Activated CD4-positive, alpha-beta T cell treated with anti-CD3 and anti-CD28 coated beads for 36 hours (primary cell): ENCODE measurements at regions of chr5 and their contacts with region 1.

Region 1: DNA sequence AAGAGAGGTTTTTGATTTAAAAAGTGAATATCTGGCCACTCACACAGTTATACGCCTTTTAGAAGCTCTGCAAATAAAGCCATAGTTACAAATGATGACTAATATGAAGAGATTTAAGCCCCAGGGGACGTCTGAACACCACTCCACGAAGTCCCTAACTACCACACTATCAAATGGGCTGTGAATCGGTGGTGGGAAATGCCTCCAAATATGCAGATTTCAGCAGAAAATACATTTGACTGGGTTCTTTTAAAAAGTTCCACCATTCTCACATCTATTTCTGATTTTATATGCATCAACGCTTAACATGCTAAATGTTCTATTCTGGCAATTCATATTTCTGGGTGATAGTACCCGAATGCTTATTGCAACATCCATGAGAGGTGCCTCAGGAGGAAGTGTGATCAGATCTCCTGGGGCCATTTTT is 22.5 kb downstream of the TICAM2 start:
- DNase-seq: no peak
- ATAC-seq: no peak
- H3K4me3 Mint-ChIP-seq: no peak overlapping the region
- H3K27ac Mint-ChIP-seq: no peak overlapping the region
- H3K4me1 Mint-ChIP-seq: no peaks in the 10 kb centered on the region
- H3K27me3 Mint-ChIP-seq: no peaks in the 10 kb centered on the region

Region 2: GRCh38 chr5:114658194-114658593 is 921.6 kb before region 1 on chr5:
- CTCF ChIA-PET with region 1: no interaction called
- POLR2A ChIA-PET with region 1: no interaction called
- intact Hi-C with region 1: no loop called
- DNase-seq: no peak
- ATAC-seq: no peak
- H3K4me3 Mint-ChIP-seq: no peak overlapping the region
- H3K27ac Mint-ChIP-seq: no peak overlapping the region
- H3K4me1 Mint-ChIP-seq: no peaks in the 10 kb centered on the region
- H3K27me3 Mint-ChIP-seq: no peaks in the 10 kb centered on the region

Region 3: GRCh38 chr5:115098041-115098702 is 481.6 kb before region 1 on chr5:
- CTCF ChIA-PET with region 1: interaction called, 5 read pairs
- POLR2A ChIA-PET with region 1: no interaction called
- intact Hi-C with region 1: loop called (anchors 2 to 10 kb)
- DNase-seq: peak; percentile 49
- ATAC-seq: peak; percentile 71
- H3K4me3 Mint-ChIP-seq: no peak overlapping the region
- H3K27ac Mint-ChIP-seq: no peak overlapping the region
- H3K4me1 Mint-ChIP-seq: no peaks in the 10 kb centered on the region
- H3K27me3 Mint-ChIP-seq: peaks cover 12% of the 10 kb centered on the region

Region 4: GRCh38 chr5:115432691-115433090 is 147.1 kb before region 1 on chr5:
- CTCF ChIA-PET with region 1: interaction called, 10 read pairs
- POLR2A ChIA-PET with region 1: no interaction called
- intact Hi-C with region 1: no loop called
- DNase-seq: no peak
- ATAC-seq: no peak
- H3K4me3 Mint-ChIP-seq: no peak overlapping the region
- H3K27ac Mint-ChIP-seq: no peak overlapping the region
- H3K4me1 Mint-ChIP-seq: peaks cover 2% of the 10 kb centered on the region
- H3K27me3 Mint-ChIP-seq: peaks cover 26% of the 10 kb centered on the region

Region 5: GRCh38 chr5:115522832-115523403 is 56.8 kb before region 1 on chr5:
- CTCF ChIA-PET with region 1: interaction called, 14 read pairs
- POLR2A ChIA-PET with region 1: no interaction called
- intact Hi-C with region 1: no loop called
- DNase-seq: no peak
- ATAC-seq: peak; percentile 68
- H3K4me3 Mint-ChIP-seq: no peak overlapping the region
- H3K27ac Mint-ChIP-seq: peak overlapping the region; percentile 49
- H3K4me1 Mint-ChIP-seq: peaks cover 35% of the 10 kb centered on the region
- H3K27me3 Mint-ChIP-seq: no peaks in the 10 kb centered on the region

Region 6: DNA sequence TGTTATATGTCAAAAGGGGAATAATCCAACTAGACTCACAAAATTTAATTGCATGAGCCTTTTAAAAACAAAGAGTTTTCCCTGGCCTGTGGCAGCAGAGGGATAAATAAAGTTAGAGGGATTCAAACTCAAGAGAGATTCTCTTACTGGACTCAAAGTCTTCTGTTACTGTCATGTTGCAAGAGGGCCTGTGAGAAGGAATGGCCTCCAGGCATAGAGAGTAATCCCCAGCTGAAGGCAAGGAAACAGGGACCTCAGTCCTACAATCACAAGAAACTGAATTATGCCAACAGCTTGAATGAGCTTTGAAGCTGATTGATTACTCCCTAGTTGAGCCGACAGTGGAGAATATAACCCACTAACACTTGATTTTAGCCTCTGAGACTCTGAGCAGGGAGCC is 19.2 kb before region 1 on chr5:
- CTCF ChIA-PET with region 1: interaction called, 10 read pairs
- POLR2A ChIA-PET with region 1: no interaction called
- intact Hi-C with region 1: no loop called
- DNase-seq: no peak
- ATAC-seq: no peak
- H3K4me3 Mint-ChIP-seq: no peak overlapping the region
- H3K27ac Mint-ChIP-seq: no peak overlapping the region
- H3K4me1 Mint-ChIP-seq: peaks cover 14% of the 10 kb centered on the region
- H3K27me3 Mint-ChIP-seq: peaks cover 6% of the 10 kb centered on the region